ENCODE measurements at regions of chr12 and their contacts with region 1.

Region 1: GRCh38 chr12:92145731-92146496 is at the start of gene BTG1:
- DNase-seq: peak; percentile 96 to 100
- ATAC-seq: peak; percentile 89 to 96 (median 90)
- H3K4me3 ChIP-seq: peak within 1 kb of the TSS; percentile 83 to 98 (median 90)
- H3K27ac ChIP-seq: peak within 1 kb of the TSS; percentile 89 to 99 (median 98)
- H3K4me1 ChIP-seq: peaks cover 0 to 31% (median 8%) of the 10 kb centered on the region in 9 donors
- H3K27me3 ChIP-seq: no peaks in the 10 kb centered on the region
- CTCF ChIP-seq: no peak
- total RNA-seq, gene BTG1: 54.4 to 127 (median 71.3) TPM

Region 2: GRCh38 chr12:91382081-91382543 is 763.8 kb before region 1 on chr12:
- intact Hi-C with region 1: loop called in 5 of 10 experiments (anchors 5 to 10 kb)
- DNase-seq: peak; percentile 79 to 89
- ATAC-seq: peak; percentile 72 to 92 (median 87)
- H3K4me3 ChIP-seq: peak overlapping the region; percentile 20 to 66 (median 50)
- H3K27ac ChIP-seq: peak overlapping the region; percentile 21 to 84 (median 75)
- H3K4me1 ChIP-seq: peaks cover 0 to 15% (median 4%) of the 10 kb centered on the region in 9 donors
- H3K27me3 ChIP-seq: no peaks in the 10 kb centered on the region
- CTCF ChIP-seq: peak; percentile 77 to 94 (median 90)

Region 3: DNA sequence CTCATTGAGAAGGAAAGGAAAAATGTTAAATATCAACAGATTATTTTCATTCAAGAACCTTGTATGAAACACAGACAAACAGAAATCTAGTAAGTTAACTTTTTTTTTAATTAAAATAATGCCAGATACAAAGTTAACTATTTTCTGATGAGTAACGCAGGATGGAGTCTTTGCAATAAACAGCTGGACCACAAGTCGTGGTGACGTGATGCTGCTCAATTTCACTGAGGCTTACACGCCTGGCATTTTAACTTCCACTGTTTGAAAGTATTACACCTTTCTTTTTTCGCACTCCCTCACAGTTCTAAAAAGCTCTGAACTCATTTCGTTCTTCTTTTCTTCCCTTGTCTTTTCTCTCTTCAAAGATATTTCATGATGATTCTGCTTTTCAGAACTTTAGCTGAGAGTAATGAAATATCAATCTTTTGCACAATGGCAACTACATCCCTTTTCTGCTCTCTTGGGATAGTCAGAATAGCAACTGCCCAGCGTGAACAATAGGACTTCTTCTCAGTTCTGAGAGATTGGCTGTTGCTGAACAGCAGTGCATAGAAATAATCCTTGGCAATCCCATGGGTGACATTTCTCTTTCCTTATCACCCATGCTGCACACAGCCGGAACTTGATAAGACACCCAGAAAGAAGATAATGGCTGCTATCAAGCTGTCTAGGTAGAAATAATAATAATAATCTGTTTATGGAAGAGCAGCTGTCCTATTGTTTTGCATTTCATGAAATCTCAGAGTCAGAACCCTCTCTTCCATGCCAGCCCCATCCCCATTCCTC is 160.7 kb before region 1 on chr12:
- intact Hi-C with region 1: loop called in 3 of 10 experiments (anchors 5 to 10 kb)
- DNase-seq: no peak
- ATAC-seq: peak in 1 of 8 donors; percentile 47
- H3K4me3 ChIP-seq: no peak overlapping the region
- H3K27ac ChIP-seq: peak overlapping the region in 3 of 10 donors; percentile 9 to 64 (median 12)
- H3K4me1 ChIP-seq: peaks cover 0 to 66% (median 41%) of the 10 kb centered on the region in 9 donors
- H3K27me3 ChIP-seq: no peaks in the 10 kb centered on the region
- CTCF ChIP-seq: no peak

Region 4: DNA sequence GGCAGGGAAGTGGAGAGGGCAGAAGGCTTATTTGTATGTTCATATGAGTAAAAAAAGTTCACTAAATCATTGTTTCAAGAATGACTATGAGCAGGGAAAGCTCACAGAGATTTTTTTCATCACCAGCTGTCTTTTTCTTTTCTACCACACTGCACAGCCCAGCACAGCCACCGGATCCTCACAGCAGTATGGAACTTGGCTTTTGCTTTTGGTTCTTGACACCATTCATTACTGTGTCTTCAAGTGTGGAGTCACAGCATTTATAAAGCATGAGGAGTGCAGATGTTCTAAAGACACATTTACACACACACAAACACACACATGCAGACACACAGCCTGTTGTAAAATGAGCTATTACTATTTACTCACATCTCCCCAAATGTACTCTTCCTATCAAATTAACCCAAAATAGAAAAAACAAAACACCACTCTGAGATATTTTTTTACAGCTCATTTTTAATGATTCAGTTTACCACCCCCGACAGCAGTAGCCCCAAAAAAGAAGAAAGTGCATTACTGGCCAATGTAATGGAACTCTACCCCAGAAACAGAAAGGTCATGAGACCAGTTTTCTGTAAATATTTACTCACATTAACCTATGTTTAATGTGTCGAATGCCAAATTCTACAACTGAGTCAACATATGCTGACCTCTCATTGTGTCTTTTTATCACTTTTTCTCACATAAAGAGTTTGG is 60.7 kb before region 1 on chr12:
- intact Hi-C with region 1: no loop called
- DNase-seq: no peak
- ATAC-seq: no peak
- H3K4me3 ChIP-seq: no peak overlapping the region
- H3K27ac ChIP-seq: no peak overlapping the region
- H3K4me1 ChIP-seq: peaks cover 0 to 27% (median 2%) of the 10 kb centered on the region in 9 donors
- H3K27me3 ChIP-seq: no peaks in the 10 kb centered on the region
- CTCF ChIP-seq: no peak

Region 5: DNA sequence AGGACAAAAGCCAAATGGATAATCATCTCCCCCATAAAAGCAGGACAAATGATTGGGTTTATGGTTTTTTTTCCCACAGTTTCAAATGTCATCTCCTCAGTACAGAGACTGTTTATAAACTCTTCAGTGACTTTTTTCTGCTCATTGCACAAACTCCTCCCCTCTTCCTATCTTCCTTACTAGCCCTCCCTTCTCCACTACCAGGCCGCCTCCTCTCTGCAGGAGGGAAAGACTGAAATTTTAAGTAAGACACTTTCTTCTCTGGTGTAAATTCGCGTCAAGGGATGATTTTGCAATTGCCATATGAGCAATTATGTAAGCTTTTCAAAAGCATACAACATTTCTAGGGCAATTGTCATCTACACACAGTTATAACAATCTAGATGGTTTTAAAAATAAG is 37.3 kb before region 1 on chr12:
- intact Hi-C with region 1: no loop called
- DNase-seq: peak in 1 of 2 donors; percentile 15
- ATAC-seq: peak in 6 of 8 donors; percentile 44 to 74 (median 64)
- H3K4me3 ChIP-seq: no peak overlapping the region
- H3K27ac ChIP-seq: peak overlapping the region in 1 of 10 donors; percentile 35
- H3K4me1 ChIP-seq: peaks cover 0 to 40% (median 3%) of the 10 kb centered on the region in 9 donors
- H3K27me3 ChIP-seq: no peaks in the 10 kb centered on the region
- CTCF ChIP-seq: no peak

Region 6: GRCh38 chr12:92244036-92244435 is 98.1 kb after region 1 on chr12:
- intact Hi-C with region 1: loop called in 6 of 10 experiments (anchors 2 to 10 kb)
- DNase-seq: peak in 1 of 2 donors; percentile 60
- ATAC-seq: peak; percentile 86 to 98 (median 92)
- H3K4me3 ChIP-seq: peak overlapping the region in 1 of 10 donors; percentile 20
- H3K27ac ChIP-seq: peak overlapping the region; percentile 10 to 84 (median 56)
- H3K4me1 ChIP-seq: peaks cover 0 to 32% (median 16%) of the 10 kb centered on the region in 9 donors
- H3K27me3 ChIP-seq: no peaks in the 10 kb centered on the region
- CTCF ChIP-seq: peak in 6 of 9 donors; percentile 13 to 59 (median 33)

Region 7: DNA sequence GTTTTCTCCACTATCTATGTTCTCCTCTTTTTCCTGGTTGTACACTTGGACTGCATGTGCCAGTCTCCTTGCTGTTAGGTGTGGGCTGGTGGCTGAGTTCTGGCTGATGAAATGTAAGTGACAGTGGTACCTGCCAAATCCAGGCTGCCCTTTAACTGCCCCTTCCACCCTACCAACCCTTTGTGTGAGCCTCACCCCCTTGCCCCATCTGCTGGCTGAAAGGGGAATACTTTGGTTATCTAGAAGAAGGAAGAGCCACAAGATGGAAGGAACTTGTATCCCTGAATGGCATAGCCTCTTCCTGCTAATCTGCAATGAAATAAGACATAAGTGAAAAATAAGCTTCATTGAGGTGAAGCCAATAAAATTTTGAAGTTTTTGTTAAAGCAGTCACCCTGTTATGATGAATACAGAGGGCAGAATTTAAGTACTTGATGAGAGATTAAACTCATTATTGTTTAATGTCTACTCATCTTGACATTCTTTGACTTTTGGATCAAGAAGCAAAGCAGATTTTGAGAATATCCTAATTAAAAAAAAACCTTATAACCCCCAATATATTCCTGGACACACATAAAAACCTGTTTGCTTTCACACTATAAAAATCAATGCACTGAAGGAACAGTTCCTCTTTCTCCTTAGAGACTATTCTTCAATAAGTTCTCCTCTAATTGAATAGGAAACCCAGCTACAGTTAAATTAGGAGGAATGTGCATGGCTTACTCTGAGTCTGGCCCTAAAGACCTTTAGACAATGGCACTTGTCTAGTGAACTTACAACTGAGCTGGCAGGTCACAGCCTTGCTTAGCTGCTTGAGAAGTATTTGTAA is 262.4 kb after region 1 on chr12:
- intact Hi-C with region 1: loop called in 2 of 10 experiments (anchors 10 kb)
- DNase-seq: peak; percentile 11 to 23
- ATAC-seq: peak in 5 of 8 donors; percentile 26 to 93 (median 82)
- H3K4me3 ChIP-seq: no peak overlapping the region
- H3K27ac ChIP-seq: no peak overlapping the region
- H3K4me1 ChIP-seq: peaks cover 0 to 27% (median 18%) of the 10 kb centered on the region in 9 donors
- H3K27me3 ChIP-seq: no peaks in the 10 kb centered on the region
- CTCF ChIP-seq: peak in 6 of 9 donors; percentile 14 to 56 (median 34)

Region 8: DNA sequence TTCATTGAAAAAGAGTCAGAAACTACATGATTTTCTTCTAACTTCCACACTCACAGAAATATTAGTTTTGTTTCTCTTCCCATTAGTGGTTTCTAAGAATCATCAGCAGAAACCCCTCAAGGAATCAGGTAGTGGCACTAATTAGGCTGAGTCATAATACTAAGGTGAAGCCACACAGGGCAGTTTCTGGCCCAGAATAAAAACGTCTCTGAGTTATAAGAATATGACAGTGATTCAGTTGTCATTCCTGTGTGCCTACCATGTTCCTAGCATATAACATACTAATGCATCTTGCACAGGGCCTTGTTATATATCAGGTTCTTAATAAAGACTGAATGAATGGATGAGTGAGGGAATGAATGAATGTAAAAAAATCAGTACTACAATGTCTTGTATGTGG is 350.9 kb after region 1 on chr12:
- intact Hi-C with region 1: loop called in 3 of 10 experiments (anchors 5 to 10 kb)
- DNase-seq: no peak
- ATAC-seq: no peak
- H3K4me3 ChIP-seq: no peak overlapping the region
- H3K27ac ChIP-seq: no peak overlapping the region
- H3K4me1 ChIP-seq: peaks cover 0 to 31% (median 3%) of the 10 kb centered on the region in 9 donors
- H3K27me3 ChIP-seq: no peaks in the 10 kb centered on the region
- CTCF ChIP-seq: no peak

Region 9: DNA sequence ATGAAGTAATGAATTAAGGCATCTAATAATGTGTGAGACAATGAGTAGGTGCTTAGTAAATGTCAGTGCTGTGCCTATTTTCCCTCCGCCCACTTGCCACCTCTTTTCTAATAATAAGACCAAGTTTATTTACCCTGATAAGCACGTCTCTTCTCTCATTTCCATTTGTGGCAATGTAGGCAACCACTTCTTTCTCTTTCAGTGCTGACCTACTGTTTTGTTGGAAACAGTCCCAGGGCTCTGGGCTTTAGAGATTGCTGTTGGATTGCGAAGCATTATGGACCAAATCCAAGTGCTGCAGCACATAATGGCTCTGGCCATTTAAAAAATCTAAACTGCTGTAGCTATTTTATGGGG is 415.6 kb after region 1 on chr12:
- intact Hi-C with region 1: loop called in 3 of 10 experiments (anchors 5 kb)
- DNase-seq: peak in 1 of 2 donors; percentile 74
- ATAC-seq: peak; percentile 76 to 96 (median 89)
- H3K4me3 ChIP-seq: no peak overlapping the region
- H3K27ac ChIP-seq: peak overlapping the region in 9 of 10 donors; percentile 29 to 68 (median 45)
- H3K4me1 ChIP-seq: peaks cover 0 to 44% (median 24%) of the 10 kb centered on the region in 9 donors
- H3K27me3 ChIP-seq: no peaks in the 10 kb centered on the region
- CTCF ChIP-seq: no peak

Measured in heart right ventricle (tissue), 16 donors.